IMR-90 (cell line): ENCODE measurements at regions of chr19 and their contacts with region 1.

Region 1: GRCh38 chr19:40777937-40778705 is at the start of gene RAB4B:
- DNase-seq: peak; percentile 99
- ATAC-seq: peak; percentile 88
- H3K4me3 ChIP-seq: peak within 1 kb of the TSS; percentile 74
- H3K27ac ChIP-seq: peak within 1 kb of the TSS; percentile 89
- H3K4me1 ChIP-seq: peaks cover 6% of the 10 kb centered on the region
- H3K27me3 ChIP-seq: no peaks in the 10 kb centered on the region
- CTCF ChIP-seq: no peak
- POLR2A ChIP-seq: peak; percentile 88
- RAD21 ChIP-seq: no peak
- total RNA-seq, gene RAB4B: 7.9 and 8.3 TPM in 2 replicates

Region 2: GRCh38 chr19:40502647-40503319 is 275.3 kb before region 1 on chr19:
- CTCF ChIA-PET with region 1: no interaction called
- POLR2A ChIA-PET with region 1: no interaction called
- dilution Hi-C with region 1: no loop called
- in situ Hi-C with region 1: no loop called
- intact Hi-C with region 1: no loop called
- DNase-seq: no peak
- ATAC-seq: no peak
- H3K4me3 ChIP-seq: no peak overlapping the region
- H3K27ac ChIP-seq: no peak overlapping the region
- H3K4me1 ChIP-seq: no peaks in the 10 kb centered on the region
- H3K27me3 ChIP-seq: peaks cover 25% of the 10 kb centered on the region
- CTCF ChIP-seq: no peak
- POLR2A ChIP-seq: no peak
- RAD21 ChIP-seq: no peak

Region 3: GRCh38 chr19:40798223-40798996 is 20.3 kb after region 1 on chr19:
- CTCF ChIA-PET with region 1: interaction called, 3 read pairs
- POLR2A ChIA-PET with region 1: interaction called, 11 read pairs
- dilution Hi-C with region 1: no loop called
- in situ Hi-C with region 1: no loop called
- intact Hi-C with region 1: no loop called
- DNase-seq: peak; percentile 99
- ATAC-seq: peak; percentile 13
- H3K4me3 ChIP-seq: peak overlapping the region; percentile 55
- H3K27ac ChIP-seq: peak overlapping the region; percentile 47
- H3K4me1 ChIP-seq: peaks cover 28% of the 10 kb centered on the region
- H3K27me3 ChIP-seq: no peaks in the 10 kb centered on the region
- CTCF ChIP-seq: peak; percentile 47
- POLR2A ChIP-seq: no peak
- RAD21 ChIP-seq: no peak; the same call in 1 of the 2 replicates